Caco-2 (cell line): ENCODE measurements at regions of chr3 and their contacts with region 1.

Region 1: GRCh38 chr3:49339945-49340800 is at the start of gene USP4:
- DNase-seq: peak; percentile 93 to 94
- H3K4me3 ChIP-seq: peak within 1 kb of the TSS; percentile 73
- H3K4me3 Mint-ChIP-seq: peak within 1 kb of the TSS; percentile 91
- H3K27ac Mint-ChIP-seq: peak within 1 kb of the TSS; percentile 90
- H3K4me1 ChIP-seq: 0 out of 2 replicates have a peak, but pooled peaks cover 4% of the 10 kb centered on the region
- H3K4me1 Mint-ChIP-seq: peaks cover 16% of the 10 kb centered on the region
- H3K27me3 ChIP-seq: no peaks in the 10 kb centered on the region
- H3K27me3 Mint-ChIP-seq: no peaks in the 10 kb centered on the region
- CTCF ChIP-seq: peak; percentile 15 to 81
- total RNA-seq, gene USP4: 36.4 and 37.8 TPM in 2 replicates

Region 2: DNA sequence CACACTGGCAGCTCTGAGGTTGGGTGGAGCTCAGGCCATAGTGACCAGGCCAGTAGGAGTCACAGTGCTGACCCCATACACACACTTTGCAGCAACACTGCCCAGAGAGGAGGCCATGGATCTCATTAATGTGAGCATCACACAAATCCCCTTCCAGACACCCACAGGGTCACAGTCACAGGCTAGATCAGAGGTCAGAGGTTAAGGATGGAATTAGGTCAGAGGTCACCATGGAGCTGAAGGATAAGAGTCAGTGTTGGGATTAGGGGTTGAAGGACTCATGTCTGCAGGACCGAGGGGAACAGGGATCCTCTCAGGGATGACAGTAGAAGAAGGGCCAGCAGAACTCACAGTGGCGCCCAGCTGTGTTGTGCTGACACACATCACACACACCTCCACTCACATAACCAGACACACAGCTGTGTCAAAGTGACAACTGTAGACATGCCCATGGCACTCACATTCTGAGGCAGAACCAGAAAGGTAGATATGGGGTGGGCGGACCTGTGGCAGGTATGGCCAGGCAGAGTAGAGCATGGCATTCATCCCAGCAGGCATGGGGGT is 186.7 kb before region 1 on chr3:
- CTCF ChIA-PET with region 1: no interaction called
- POLR2A ChIA-PET with region 1: no interaction called
- intact Hi-C with region 1: no loop called
- DNase-seq: no peak
- H3K4me3 ChIP-seq: no peak overlapping the region
- H3K4me3 Mint-ChIP-seq: no peak overlapping the region
- H3K27ac Mint-ChIP-seq: no peak overlapping the region
- H3K4me1 ChIP-seq: no peaks in the 10 kb centered on the region
- H3K4me1 Mint-ChIP-seq: no peaks in the 10 kb centered on the region
- H3K27me3 ChIP-seq: no peaks in the 10 kb centered on the region
- H3K27me3 Mint-ChIP-seq: no peaks in the 10 kb centered on the region
- CTCF ChIP-seq: no peak

Region 3: GRCh38 chr3:49351521-49352011 is 11.4 kb after region 1 on chr3:
- CTCF ChIA-PET with region 1: interaction called, 14 read pairs
- POLR2A ChIA-PET with region 1: interaction called, 21 read pairs
- intact Hi-C with region 1: no loop called
- DNase-seq: no peak
- H3K4me3 ChIP-seq: no peak overlapping the region
- H3K4me3 Mint-ChIP-seq: peak overlapping the region; percentile 45
- H3K27ac Mint-ChIP-seq: peak overlapping the region; percentile 76
- H3K4me1 ChIP-seq: peaks cover 23% of the 10 kb centered on the region
- H3K4me1 Mint-ChIP-seq: peaks cover 15% of the 10 kb centered on the region
- H3K27me3 ChIP-seq: no peaks in the 10 kb centered on the region
- H3K27me3 Mint-ChIP-seq: no peaks in the 10 kb centered on the region
- CTCF ChIP-seq: no peak

Region 4: DNA sequence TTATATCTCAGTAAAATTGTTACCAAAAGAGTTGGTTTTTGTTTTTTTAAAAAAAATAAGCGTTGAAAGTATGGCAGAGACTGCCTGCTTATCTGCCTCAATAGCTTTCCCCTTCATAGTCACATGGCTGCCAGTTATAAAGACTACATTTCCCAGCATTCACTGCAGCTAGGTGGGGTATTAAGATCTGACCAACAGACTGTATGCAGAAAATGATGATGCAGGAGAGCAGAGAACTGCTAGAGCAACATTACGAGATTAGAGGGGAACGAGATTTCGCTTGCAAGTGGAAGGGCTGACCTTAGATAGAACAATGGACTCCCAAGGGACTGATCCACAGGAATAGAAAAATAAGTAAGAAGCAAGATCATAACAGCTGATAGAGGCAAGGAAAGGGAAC is 57.3 kb after region 1 on chr3:
- CTCF ChIA-PET with region 1: interaction called, 11 read pairs
- POLR2A ChIA-PET with region 1: interaction called, 6 read pairs
- intact Hi-C with region 1: no loop called
- DNase-seq: peak in 1 of 2 experiments; percentile 37
- H3K4me3 ChIP-seq: no peak overlapping the region
- H3K4me3 Mint-ChIP-seq: peak overlapping the region; percentile 13
- H3K27ac Mint-ChIP-seq: peak overlapping the region; percentile 4
- H3K4me1 ChIP-seq: peaks cover 24% of the 10 kb centered on the region
- H3K4me1 Mint-ChIP-seq: peaks cover 23% of the 10 kb centered on the region
- H3K27me3 ChIP-seq: no peaks in the 10 kb centered on the region
- H3K27me3 Mint-ChIP-seq: no peaks in the 10 kb centered on the region
- CTCF ChIP-seq: no peak

Region 5: GRCh38 chr3:49428697-49429100 is 88.5 kb after region 1 on chr3:
- CTCF ChIA-PET with region 1: interaction called, 21 read pairs
- POLR2A ChIA-PET with region 1: interaction called, 22 read pairs
- intact Hi-C with region 1: no loop called
- DNase-seq: no peak
- H3K4me3 ChIP-seq: peak overlapping the region; percentile 65
- H3K4me3 Mint-ChIP-seq: peak overlapping the region; percentile 76
- H3K27ac Mint-ChIP-seq: peak overlapping the region; percentile 96
- H3K4me1 ChIP-seq: no peaks in the 10 kb centered on the region
- H3K4me1 Mint-ChIP-seq: no peaks in the 10 kb centered on the region
- H3K27me3 ChIP-seq: no peaks in the 10 kb centered on the region
- H3K27me3 Mint-ChIP-seq: no peaks in the 10 kb centered on the region
- CTCF ChIP-seq: no peak

Region 6: DNA sequence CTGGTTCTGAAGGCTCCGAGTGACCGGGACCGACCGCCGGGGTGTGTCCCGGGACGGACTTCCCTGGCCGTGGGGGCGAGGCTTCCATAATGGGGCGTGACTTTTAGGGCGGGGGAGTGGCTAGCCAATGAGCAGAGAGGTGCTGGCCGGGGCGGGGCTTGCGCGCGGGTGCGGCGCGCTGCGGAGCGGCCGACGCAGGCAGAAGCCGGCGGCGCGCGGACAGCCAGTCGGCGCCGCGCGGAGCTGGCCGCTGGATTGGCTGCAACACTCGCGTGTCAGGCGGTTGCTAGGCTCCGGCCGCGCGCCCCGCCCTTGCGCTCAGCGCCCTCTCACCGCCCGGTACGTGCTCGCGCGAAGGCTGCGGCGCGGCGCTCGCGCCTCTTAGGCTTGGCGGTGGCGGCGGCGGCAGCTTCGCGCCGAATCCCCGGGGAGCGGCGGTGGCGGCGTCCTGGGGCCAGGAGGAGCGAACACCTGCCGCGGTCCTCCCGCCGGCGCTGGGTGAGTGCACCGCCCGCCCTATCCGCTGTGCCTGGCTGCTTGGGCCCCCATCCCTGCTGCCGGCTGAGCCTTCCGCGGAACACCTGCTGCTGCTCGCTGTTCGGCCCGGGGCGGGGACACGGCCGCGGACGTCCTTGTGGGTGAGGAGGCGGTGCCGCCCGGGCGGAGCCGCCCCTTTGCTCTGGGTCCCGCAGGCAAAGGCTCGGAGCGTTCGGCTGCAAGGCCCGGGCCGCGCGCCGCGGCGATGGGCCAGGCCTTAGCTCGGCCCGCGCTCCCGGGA is 130.0 kb after region 1 on chr3 and contains the start of gene DAG1:
- CTCF ChIA-PET with region 1: interaction called, 5 read pairs
- POLR2A ChIA-PET with region 1: interaction called, 10 read pairs
- intact Hi-C with region 1: no loop called
- DNase-seq: peak; percentile 98 to 99
- H3K4me3 ChIP-seq: peak within 1 kb of the TSS; percentile 89
- H3K4me3 Mint-ChIP-seq: peak within 1 kb of the TSS; percentile 84
- H3K27ac Mint-ChIP-seq: peak within 1 kb of the TSS; percentile 98
- H3K4me1 ChIP-seq: peaks cover 52% of the 10 kb centered on the region
- H3K4me1 Mint-ChIP-seq: peaks cover 13% of the 10 kb centered on the region
- H3K27me3 ChIP-seq: no peaks in the 10 kb centered on the region
- H3K27me3 Mint-ChIP-seq: no peaks in the 10 kb centered on the region
- CTCF ChIP-seq: no peak
- total RNA-seq, gene DAG1: 154 and 177 TPM in 2 replicates